ENCODE measurements at regions of chr6 and their contacts with region 1.

Region 1: DNA sequence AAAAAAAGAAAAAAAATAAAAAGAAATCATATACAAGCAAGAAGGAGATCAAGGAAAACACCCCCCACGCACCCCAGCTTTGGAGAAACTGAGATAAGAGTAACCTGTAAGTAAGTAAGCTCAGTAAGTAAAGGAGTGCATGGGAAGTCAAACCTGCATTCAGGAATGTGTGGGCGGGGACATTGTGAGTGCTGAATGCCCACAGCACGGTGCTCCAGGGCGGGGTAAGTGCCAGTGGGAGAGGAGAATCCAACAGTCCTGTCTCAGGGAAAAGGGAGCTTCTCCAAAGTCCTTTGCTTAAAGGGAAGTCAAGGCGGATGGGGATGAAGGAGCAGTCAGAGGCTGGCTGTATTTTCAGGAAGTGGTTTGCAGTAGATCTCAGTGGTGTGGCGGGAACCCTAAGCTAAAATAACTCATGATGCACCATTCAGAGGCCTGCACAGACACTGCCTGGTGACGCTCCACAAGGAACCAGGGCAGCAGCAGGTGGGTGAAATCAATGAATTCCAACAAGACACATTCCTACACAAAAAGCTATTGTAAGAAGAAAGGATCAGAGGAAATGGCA is 368.0 kb downstream of the QKI start:
- DNase-seq: no peak
- ATAC-seq: peak in 2 of 4 donors; percentile 65 to 68
- H3K4me3 ChIP-seq: no peak overlapping the region
- H3K27ac ChIP-seq: peak overlapping the region; percentile 83
- H3K4me1 ChIP-seq: peaks cover 18% of the 10 kb centered on the region
- H3K27me3 ChIP-seq: no peaks in the 10 kb centered on the region
- CTCF ChIP-seq: no peak

Region 2: GRCh38 chr6:163695414-163695864 is 87.1 kb before region 1 on chr6:
- intact Hi-C with region 1: no loop called
- DNase-seq: no peak
- ATAC-seq: no peak
- H3K4me3 ChIP-seq: no peak overlapping the region
- H3K27ac ChIP-seq: no peak overlapping the region
- H3K4me1 ChIP-seq: no peaks in the 10 kb centered on the region
- H3K27me3 ChIP-seq: no peaks in the 10 kb centered on the region
- CTCF ChIP-seq: no peak

Region 3: GRCh38 chr6:163756079-163756478 is 26.4 kb before region 1 on chr6:
- intact Hi-C with region 1: no loop called
- DNase-seq: no peak
- ATAC-seq: peak; percentile 83 to 94 (median 86)
- H3K4me3 ChIP-seq: peak overlapping the region; percentile 17
- H3K27ac ChIP-seq: peak overlapping the region; percentile 51
- H3K4me1 ChIP-seq: peaks cover 11% of the 10 kb centered on the region
- H3K27me3 ChIP-seq: no peaks in the 10 kb centered on the region
- CTCF ChIP-seq: no peak

Region 4: DNA sequence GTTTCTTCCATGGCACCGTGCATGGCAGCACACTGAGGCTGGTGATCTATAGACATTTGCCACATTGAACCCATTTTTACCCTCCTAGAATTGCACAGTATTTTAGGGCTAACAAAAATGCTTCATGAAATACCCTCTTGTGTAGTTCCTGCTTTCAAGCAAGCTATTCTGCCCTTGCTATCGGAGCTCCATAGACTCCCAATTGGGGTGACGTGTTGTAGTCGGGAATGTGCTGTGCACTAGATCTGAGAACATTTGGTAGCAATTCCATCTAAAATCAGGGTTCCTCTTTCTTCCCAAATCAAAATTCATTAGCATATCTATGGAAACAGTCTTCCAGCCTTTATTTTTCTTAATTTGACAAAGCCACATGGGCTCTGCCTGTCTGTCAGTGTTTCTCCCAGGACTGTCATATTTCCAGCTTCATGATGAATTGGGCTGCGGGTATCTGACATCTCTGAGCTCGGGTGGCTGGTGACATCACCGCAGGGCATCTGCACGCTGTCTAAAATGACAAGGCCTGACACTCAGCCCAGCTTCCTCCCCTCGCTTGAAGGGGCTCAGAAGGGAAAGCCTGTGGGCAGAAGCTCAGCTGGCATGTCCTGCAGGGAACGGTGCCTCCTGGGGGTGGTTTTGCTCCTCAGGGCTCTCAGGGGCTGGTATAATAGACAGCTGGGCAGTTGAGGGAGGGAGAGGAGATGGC is 38.4 kb after region 1 on chr6:
- intact Hi-C with region 1: loop called in 1 of 2 experiments (anchors 5 kb)
- DNase-seq: peak; percentile 49 to 82
- ATAC-seq: peak; percentile 92 to 98 (median 94)
- H3K4me3 ChIP-seq: peak overlapping the region; percentile 5
- H3K27ac ChIP-seq: peak overlapping the region; percentile 85
- H3K4me1 ChIP-seq: peaks cover 10% of the 10 kb centered on the region
- H3K27me3 ChIP-seq: no peaks in the 10 kb centered on the region
- CTCF ChIP-seq: peak; percentile 27

Measured in psoas muscle (tissue), 8 donors.